Endothelial cell of umbilical vein (primary cell): ENCODE measurements at regions of chr3 and their contacts with region 1.

Region 1: GRCh38 chr3:48439820-48440589 is at the starts of genes CCDC51 and TMA7:
- DNase-seq: peak; percentile 96
- H3K4me3 ChIP-seq: peak within 1 kb of the TSS; percentile 73 to 91 (median 77)
- H3K27ac ChIP-seq: peak within 1 kb of the TSS; percentile 79
- H3K4me1 ChIP-seq: peaks cover 16% of the 10 kb centered on the region
- H3K27me3 ChIP-seq: no peaks in the 10 kb centered on the region
- CTCF ChIP-seq: no peak
- POLR2A ChIP-seq: peak; percentile 75
- total RNA-seq, gene CCDC51: 9.8 and 11.2 TPM in 2 replicates
- total RNA-seq, gene TMA7: 306 and 332 TPM in 2 replicates

Region 2: DNA sequence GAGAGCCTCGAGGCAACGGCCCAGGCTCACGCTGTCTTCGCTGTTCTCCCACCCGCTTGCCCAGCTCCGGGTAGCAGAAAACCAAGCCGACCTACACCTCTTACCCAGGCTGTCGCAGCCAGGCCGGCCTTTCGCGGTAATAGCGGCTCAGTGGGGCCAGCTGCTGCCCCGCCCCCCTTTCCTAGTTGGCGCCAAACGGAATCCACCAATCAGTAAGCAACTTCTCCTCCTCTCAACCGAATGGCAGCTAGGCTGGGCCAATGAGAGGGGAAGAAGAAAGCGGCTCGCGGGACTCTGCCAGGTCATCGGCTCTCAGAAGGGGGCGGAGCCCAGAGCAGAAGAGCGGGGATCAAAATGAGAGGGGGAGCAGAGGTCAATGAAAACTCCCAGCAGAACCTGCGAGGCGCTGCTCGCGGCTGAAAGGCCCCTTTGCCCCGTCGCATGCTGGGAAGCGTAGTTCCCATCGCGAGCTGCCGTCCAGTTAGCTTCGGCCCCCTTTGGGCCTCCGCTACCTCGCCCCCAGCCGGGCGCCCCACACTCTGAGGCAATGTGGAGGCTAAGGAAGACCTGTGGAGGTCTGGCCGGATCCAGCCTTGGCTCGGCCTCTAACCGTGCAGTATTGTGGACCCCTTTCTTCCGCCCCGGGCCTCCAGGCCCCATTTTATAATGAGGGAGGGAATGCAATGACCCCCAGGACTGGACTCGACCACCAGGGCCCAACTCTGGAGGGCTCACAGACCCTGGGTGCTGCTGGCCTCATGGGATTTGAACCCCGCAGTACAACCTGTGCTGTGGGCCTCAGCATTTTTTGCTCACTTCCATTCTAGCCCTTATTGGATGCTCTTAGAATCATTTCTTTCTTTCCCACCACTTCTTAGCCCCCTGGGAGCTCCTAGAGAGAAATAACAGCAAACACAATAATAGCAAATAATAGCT is 251.5 kb before region 1 on chr3 and contains the start of gene CDC25A:
- CTCF ChIA-PET with region 1: interaction called, 180 read pairs
- POLR2A ChIA-PET with region 1: no interaction called
- dilution Hi-C with region 1: no loop called
- intact Hi-C with region 1: no loop called
- DNase-seq: peak; percentile 99
- H3K4me3 ChIP-seq: peak within 1 kb of the TSS; percentile 68 to 85 (median 72)
- H3K27ac ChIP-seq: peak within 1 kb of the TSS; percentile 34
- H3K4me1 ChIP-seq: peaks cover 5% of the 10 kb centered on the region
- H3K27me3 ChIP-seq: no peaks in the 10 kb centered on the region
- CTCF ChIP-seq: no peak
- POLR2A ChIP-seq: peak; percentile 38
- total RNA-seq, gene CDC25A: 18.4 and 19.0 TPM in 2 replicates

Region 3: DNA sequence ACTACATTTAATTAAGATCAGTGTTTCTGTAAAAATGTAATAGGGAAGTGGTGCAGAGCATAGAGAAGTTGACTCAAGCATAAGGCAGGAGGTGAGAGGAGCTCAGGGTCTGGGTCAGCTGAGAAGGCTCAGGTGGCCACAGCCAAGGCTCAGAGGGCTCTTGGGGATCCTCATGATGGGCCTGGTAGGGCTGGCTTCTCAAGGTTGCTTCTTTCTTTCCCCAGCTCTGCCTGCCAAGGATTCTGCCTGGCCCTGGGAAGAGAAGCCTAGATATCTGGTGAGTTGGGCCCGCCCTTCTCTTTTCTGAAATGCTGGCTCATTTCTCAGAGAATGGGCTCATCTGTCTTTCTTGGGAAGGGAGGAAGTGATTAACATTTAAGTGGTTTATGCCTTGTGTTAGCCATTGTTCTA is 192.6 kb before region 1 on chr3:
- CTCF ChIA-PET with region 1: interaction called, 91 read pairs
- POLR2A ChIA-PET with region 1: no interaction called
- dilution Hi-C with region 1: no loop called
- intact Hi-C with region 1: no loop called
- DNase-seq: peak; percentile 74
- H3K4me3 ChIP-seq: no peak overlapping the region
- H3K27ac ChIP-seq: peak overlapping the region; percentile 92
- H3K4me1 ChIP-seq: peaks cover 22% of the 10 kb centered on the region
- H3K27me3 ChIP-seq: no peaks in the 10 kb centered on the region
- CTCF ChIP-seq: no peak
- POLR2A ChIP-seq: no peak

Region 4: GRCh38 chr3:48301020-48301796 is 138.8 kb before region 1 on chr3:
- CTCF ChIA-PET with region 1: interaction called, 21 read pairs
- POLR2A ChIA-PET with region 1: no interaction called
- dilution Hi-C with region 1: no loop called
- intact Hi-C with region 1: no loop called
- DNase-seq: peak; percentile 88
- H3K4me3 ChIP-seq: peak within 1 kb of the TSS; percentile 57 to 86 (median 65)
- H3K27ac ChIP-seq: peak within 1 kb of the TSS; percentile 51
- H3K4me1 ChIP-seq: peaks cover 8% of the 10 kb centered on the region
- H3K27me3 ChIP-seq: peaks cover 2 to 5% of the 10 kb centered on the region in 2 experiments
- CTCF ChIP-seq: no peak
- POLR2A ChIP-seq: no peak

Region 5: DNA sequence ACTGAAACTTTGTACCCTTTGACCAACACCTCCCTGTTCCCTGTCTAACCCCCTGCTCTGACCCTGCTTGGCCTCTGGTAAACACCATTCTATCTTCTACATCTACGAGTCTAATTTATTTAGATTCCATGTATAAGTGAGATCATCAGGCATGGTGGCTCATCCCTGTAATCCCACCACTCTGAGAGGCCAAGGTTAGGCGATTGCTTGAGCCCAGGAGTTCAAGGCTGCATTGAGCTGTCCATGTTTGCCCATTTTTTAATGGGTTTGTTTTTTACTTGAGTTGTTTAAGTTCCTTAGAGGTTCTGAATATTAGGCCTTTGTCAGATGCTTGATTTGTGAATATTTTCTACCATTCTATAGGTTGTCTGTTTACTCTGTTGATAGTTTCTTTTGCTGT is 51.0 kb before region 1 on chr3:
- CTCF ChIA-PET with region 1: interaction called, 25 read pairs
- POLR2A ChIA-PET with region 1: no interaction called
- dilution Hi-C with region 1: no loop called
- intact Hi-C with region 1: no loop called
- DNase-seq: no peak
- H3K4me3 ChIP-seq: no peak overlapping the region
- H3K27ac ChIP-seq: no peak overlapping the region
- H3K4me1 ChIP-seq: no peaks in the 10 kb centered on the region
- H3K27me3 ChIP-seq: peaks cover 15 to 40% of the 10 kb centered on the region in 2 experiments
- CTCF ChIP-seq: no peak
- POLR2A ChIP-seq: no peak

Region 6: GRCh38 chr3:48422270-48422669 is 17.7 kb before region 1 on chr3:
- CTCF ChIA-PET with region 1: interaction called, 46 read pairs
- POLR2A ChIA-PET with region 1: no interaction called
- dilution Hi-C with region 1: no loop called
- intact Hi-C with region 1: no loop called
- DNase-seq: no peak
- H3K4me3 ChIP-seq: no peak overlapping the region
- H3K27ac ChIP-seq: no peak overlapping the region
- H3K4me1 ChIP-seq: no peaks in the 10 kb centered on the region
- H3K27me3 ChIP-seq: no peaks in the 10 kb centered on the region
- CTCF ChIP-seq: no peak
- POLR2A ChIP-seq: no peak

Region 7: GRCh38 chr3:48507351-48508061 is 67.5 kb after region 1 on chr3:
- CTCF ChIA-PET with region 1: interaction called, 24 read pairs
- POLR2A ChIA-PET with region 1: no interaction called
- dilution Hi-C with region 1: no loop called
- intact Hi-C with region 1: loop called (anchors 2 kb)
- DNase-seq: peak; percentile 72
- H3K4me3 ChIP-seq: no peak overlapping the region
- H3K27ac ChIP-seq: no peak overlapping the region
- H3K4me1 ChIP-seq: peaks cover 21% of the 10 kb centered on the region
- H3K27me3 ChIP-seq: no peaks in the 10 kb centered on the region
- CTCF ChIP-seq: peak; percentile 41 to 74
- POLR2A ChIP-seq: no peak

Region 8: DNA sequence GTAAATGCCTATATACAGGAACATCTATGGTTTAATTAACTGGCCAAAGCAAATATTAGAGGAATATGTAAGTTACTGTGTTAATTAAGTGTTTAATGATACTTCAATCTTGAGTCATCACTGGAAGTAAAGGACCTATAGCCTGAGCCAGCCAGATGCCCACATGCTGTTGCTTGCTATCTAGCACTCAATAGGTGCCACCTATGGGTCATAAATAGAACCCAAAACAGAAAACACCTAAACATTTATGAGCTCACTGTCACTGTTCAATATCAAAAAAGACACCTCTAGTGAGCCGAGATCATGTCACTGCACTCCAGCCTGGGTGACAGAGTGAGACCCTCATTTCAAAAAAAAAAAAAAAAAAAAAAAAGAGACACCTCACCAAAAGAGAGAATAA is 325.4 kb after region 1 on chr3:
- CTCF ChIA-PET with region 1: no interaction called
- POLR2A ChIA-PET with region 1: no interaction called
- dilution Hi-C with region 1: no loop called
- intact Hi-C with region 1: no loop called
- DNase-seq: no peak
- H3K4me3 ChIP-seq: no peak overlapping the region
- H3K27ac ChIP-seq: no peak overlapping the region
- H3K4me1 ChIP-seq: no peaks in the 10 kb centered on the region
- H3K27me3 ChIP-seq: no peaks in the 10 kb centered on the region
- CTCF ChIP-seq: peak in 1 of 2 donors; percentile 7
- POLR2A ChIP-seq: no peak

Region 9: GRCh38 chr3:49158108-49158709 is 718.2 kb after region 1 on chr3:
- CTCF ChIA-PET with region 1: no interaction called
- POLR2A ChIA-PET with region 1: no interaction called
- dilution Hi-C with region 1: no loop called
- intact Hi-C with region 1: no loop called
- DNase-seq: no peak
- H3K4me3 ChIP-seq: no peak overlapping the region
- H3K27ac ChIP-seq: no peak overlapping the region
- H3K4me1 ChIP-seq: no peaks in the 10 kb centered on the region
- H3K27me3 ChIP-seq: no peaks in the 10 kb centered on the region
- CTCF ChIP-seq: peak; percentile 12 to 19
- POLR2A ChIP-seq: no peak